AG04449 (cell line): ENCODE measurements at regions of chr13 and their contacts with region 1.

Region 1: GRCh38 chr13:32581177-32581786 is 5.0 kb upstream of the PDS5B start:
- DNase-seq: no peak
- H3K4me3 ChIP-seq: no peak overlapping the region
- CTCF ChIP-seq: peak; percentile 14

Region 2: DNA sequence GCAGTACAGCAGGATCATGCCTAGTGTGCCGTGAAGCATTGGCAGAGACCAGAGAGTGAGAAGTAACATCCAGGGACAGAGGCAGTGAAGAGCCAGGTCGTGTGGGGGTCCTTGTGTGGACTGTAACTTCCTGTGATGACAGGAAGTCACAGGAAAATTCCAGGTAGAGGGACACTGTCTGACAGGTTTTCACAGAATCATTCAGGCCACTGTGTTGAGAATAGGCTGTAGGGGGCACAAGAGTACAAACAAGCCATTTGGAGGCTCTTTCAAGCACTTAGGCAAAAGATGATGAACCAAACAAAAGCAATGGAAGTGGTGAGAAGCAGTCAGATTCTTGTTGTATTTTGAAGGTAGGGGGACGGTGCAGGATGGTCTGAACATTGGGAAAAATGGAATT is 199.7 kb before region 1 on chr13:
- CTCF ChIA-PET with region 1: interaction called, 61 read pairs
- POLR2A ChIA-PET with region 1: no interaction called
- DNase-seq: no peak
- H3K4me3 ChIP-seq: no peak overlapping the region
- CTCF ChIP-seq: peak; percentile 47

Region 3: GRCh38 chr13:32594157-32594738 is 13.0 kb after region 1 on chr13:
- CTCF ChIA-PET with region 1: interaction called, 13 read pairs
- POLR2A ChIA-PET with region 1: no interaction called
- DNase-seq: no peak
- H3K4me3 ChIP-seq: no peak overlapping the region
- CTCF ChIP-seq: no peak